ENCODE measurements at regions of chr2 and their contacts with region 1.

Region 1: GRCh38 chr2:42196403-42197267 is 27.5 kb downstream of the EML4 start:
- DNase-seq: peak in 8 of 9 experiments; percentile 15 to 78 (median 47)
- ATAC-seq: peak; percentile 80
- H3K4me3 ChIP-seq: no peak overlapping the region
- H3K4me3 Mint-ChIP-seq: no peak overlapping the region
- H3K27ac ChIP-seq: no peak overlapping the region
- H3K27ac Mint-ChIP-seq: peak overlapping the region; percentile 52
- H3K4me1 ChIP-seq: peaks cover 51% of the 10 kb centered on the region
- H3K4me1 Mint-ChIP-seq: peaks cover 79% of the 10 kb centered on the region
- H3K27me3 ChIP-seq: no peaks in the 10 kb centered on the region
- H3K27me3 Mint-ChIP-seq: no peaks in the 10 kb centered on the region
- CTCF ChIP-seq: peak; percentile 74

Region 2: GRCh38 chr2:40896358-40896757 is 1300.3 kb before region 1 on chr2:
- CTCF ChIA-PET with region 1: no interaction called
- POLR2A ChIA-PET with region 1: no interaction called
- intact Hi-C with region 1: no loop called
- DNase-seq: no peak
- ATAC-seq: no peak
- H3K4me3 ChIP-seq: no peak overlapping the region
- H3K4me3 Mint-ChIP-seq: no peak overlapping the region
- H3K27ac ChIP-seq: no peak overlapping the region
- H3K27ac Mint-ChIP-seq: no peak overlapping the region
- H3K4me1 ChIP-seq: no peaks in the 10 kb centered on the region
- H3K4me1 Mint-ChIP-seq: no peaks in the 10 kb centered on the region
- H3K27me3 ChIP-seq: no peaks in the 10 kb centered on the region
- H3K27me3 Mint-ChIP-seq: no peaks in the 10 kb centered on the region
- CTCF ChIP-seq: no peak

Region 3: GRCh38 chr2:41869542-41870264 is 326.9 kb before region 1 on chr2:
- CTCF ChIA-PET with region 1: interaction called, 6 read pairs
- POLR2A ChIA-PET with region 1: no interaction called
- intact Hi-C with region 1: loop called in 1 of 2 experiments (anchors 5 kb)
- DNase-seq: peak; percentile 44 to 83 (median 75)
- ATAC-seq: peak; percentile 83
- H3K4me3 ChIP-seq: no peak overlapping the region
- H3K4me3 Mint-ChIP-seq: no peak overlapping the region
- H3K27ac ChIP-seq: no peak overlapping the region
- H3K27ac Mint-ChIP-seq: no peak overlapping the region
- H3K4me1 ChIP-seq: no peaks in the 10 kb centered on the region
- H3K4me1 Mint-ChIP-seq: peaks cover 19% of the 10 kb centered on the region
- H3K27me3 ChIP-seq: no peaks in the 10 kb centered on the region
- H3K27me3 Mint-ChIP-seq: peaks cover 5% of the 10 kb centered on the region
- CTCF ChIP-seq: peak; percentile 76

Region 4: DNA sequence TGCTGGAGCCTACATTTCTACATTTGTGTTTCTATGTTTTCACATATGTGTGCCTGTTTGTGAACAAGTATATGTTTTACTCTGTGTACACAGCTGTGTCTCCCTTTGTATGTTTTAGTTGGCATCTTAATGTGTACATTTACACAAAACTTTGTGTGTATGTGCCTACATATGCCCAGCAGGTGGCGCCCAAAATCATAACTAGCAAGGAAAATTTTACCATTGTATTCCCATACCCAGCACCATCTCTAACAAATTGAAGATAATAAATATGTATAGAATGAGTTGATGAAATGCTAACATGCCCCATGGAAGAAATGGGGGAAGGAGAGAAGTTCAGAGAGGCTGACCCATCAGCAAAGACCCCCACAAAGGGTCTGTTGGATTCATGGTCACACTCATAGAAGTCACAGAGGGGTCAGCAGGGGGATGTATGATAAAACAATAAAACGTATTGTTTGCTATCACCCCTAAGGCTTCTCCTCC is 100.7 kb before region 1 on chr2:
- CTCF ChIA-PET with region 1: interaction called, 119 read pairs
- POLR2A ChIA-PET with region 1: interaction called, 5 read pairs
- intact Hi-C with region 1: loop called (anchors 1 kb)
- DNase-seq: peak; percentile 52 to 86 (median 79)
- ATAC-seq: peak; percentile 70
- H3K4me3 ChIP-seq: no peak overlapping the region
- H3K4me3 Mint-ChIP-seq: no peak overlapping the region
- H3K27ac ChIP-seq: no peak overlapping the region
- H3K27ac Mint-ChIP-seq: no peak overlapping the region
- H3K4me1 ChIP-seq: peaks cover 37% of the 10 kb centered on the region
- H3K4me1 Mint-ChIP-seq: peaks cover 43% of the 10 kb centered on the region
- H3K27me3 ChIP-seq: no peaks in the 10 kb centered on the region
- H3K27me3 Mint-ChIP-seq: no peaks in the 10 kb centered on the region
- CTCF ChIP-seq: peak; percentile 84

Region 5: GRCh38 chr2:42127425-42128424 is 68.9 kb before region 1 on chr2:
- CTCF ChIA-PET with region 1: interaction called, 12 read pairs
- POLR2A ChIA-PET with region 1: interaction called, 3 read pairs
- intact Hi-C with region 1: loop called in 1 of 2 experiments (anchors 2 kb)
- DNase-seq: peak in 7 of 9 experiments; percentile 21 to 78 (median 51)
- ATAC-seq: peak; percentile 39
- H3K4me3 ChIP-seq: peak overlapping the region in 1 of 2 experiments; percentile 12
- H3K4me3 Mint-ChIP-seq: peak overlapping the region; percentile 76
- H3K27ac ChIP-seq: peak overlapping the region; percentile 20 to 79
- H3K27ac Mint-ChIP-seq: peak overlapping the region; percentile 95
- H3K4me1 ChIP-seq: peaks cover 95% of the 10 kb centered on the region
- H3K4me1 Mint-ChIP-seq: peaks cover 88% of the 10 kb centered on the region
- H3K27me3 ChIP-seq: no peaks in the 10 kb centered on the region
- H3K27me3 Mint-ChIP-seq: no peaks in the 10 kb centered on the region
- CTCF ChIP-seq: no peak

Region 6: DNA sequence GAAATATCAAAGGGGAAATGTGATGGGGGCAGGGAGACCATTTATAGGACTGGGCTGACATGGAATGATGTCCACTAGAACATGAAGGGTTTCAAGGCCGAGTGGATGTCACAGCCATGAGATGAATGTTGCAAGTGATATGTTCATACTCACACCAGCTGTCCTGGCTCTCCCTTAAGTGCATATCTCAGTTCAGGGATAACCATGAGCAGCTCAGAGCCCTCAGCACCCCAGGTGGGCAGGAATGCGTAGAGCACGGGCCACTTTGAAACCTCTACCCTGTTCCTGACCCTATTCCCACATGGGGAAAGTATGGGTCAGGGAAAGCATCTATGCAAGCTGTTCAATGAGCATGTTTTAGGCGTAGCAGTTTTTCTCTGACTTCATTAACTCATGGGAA is 39.9 kb before region 1 on chr2:
- CTCF ChIA-PET with region 1: no interaction called
- POLR2A ChIA-PET with region 1: no interaction called
- intact Hi-C with region 1: loop called in 1 of 2 experiments (anchors 5 kb)
- DNase-seq: no peak
- ATAC-seq: no peak
- H3K4me3 ChIP-seq: no peak overlapping the region
- H3K4me3 Mint-ChIP-seq: no peak overlapping the region
- H3K27ac ChIP-seq: no peak overlapping the region
- H3K27ac Mint-ChIP-seq: no peak overlapping the region
- H3K4me1 ChIP-seq: no peaks in the 10 kb centered on the region
- H3K4me1 Mint-ChIP-seq: no peaks in the 10 kb centered on the region
- H3K27me3 ChIP-seq: no peaks in the 10 kb centered on the region
- H3K27me3 Mint-ChIP-seq: no peaks in the 10 kb centered on the region
- CTCF ChIP-seq: no peak

Region 7: GRCh38 chr2:42182654-42183267 is 13.9 kb before region 1 on chr2:
- CTCF ChIA-PET with region 1: interaction called, 12 read pairs
- POLR2A ChIA-PET with region 1: no interaction called
- intact Hi-C with region 1: no loop called
- DNase-seq: no peak
- ATAC-seq: no peak
- H3K4me3 ChIP-seq: no peak overlapping the region
- H3K4me3 Mint-ChIP-seq: no peak overlapping the region
- H3K27ac ChIP-seq: no peak overlapping the region
- H3K27ac Mint-ChIP-seq: no peak overlapping the region
- H3K4me1 ChIP-seq: peaks cover 66% of the 10 kb centered on the region
- H3K4me1 Mint-ChIP-seq: peaks cover 85% of the 10 kb centered on the region
- H3K27me3 ChIP-seq: no peaks in the 10 kb centered on the region
- H3K27me3 Mint-ChIP-seq: no peaks in the 10 kb centered on the region
- CTCF ChIP-seq: no peak

Region 8: GRCh38 chr2:42244520-42244919 is 47.9 kb after region 1 on chr2:
- CTCF ChIA-PET with region 1: interaction called, 4 read pairs
- POLR2A ChIA-PET with region 1: no interaction called
- intact Hi-C with region 1: loop called in 1 of 2 experiments (anchors 5 kb)
- DNase-seq: peak in 2 of 9 experiments; percentile 12 to 25
- ATAC-seq: peak; percentile 45
- H3K4me3 ChIP-seq: no peak overlapping the region
- H3K4me3 Mint-ChIP-seq: no peak overlapping the region
- H3K27ac ChIP-seq: no peak overlapping the region
- H3K27ac Mint-ChIP-seq: peak overlapping the region; percentile 28
- H3K4me1 ChIP-seq: peaks cover 28% of the 10 kb centered on the region
- H3K4me1 Mint-ChIP-seq: peaks cover 71% of the 10 kb centered on the region
- H3K27me3 ChIP-seq: no peaks in the 10 kb centered on the region
- H3K27me3 Mint-ChIP-seq: no peaks in the 10 kb centered on the region
- CTCF ChIP-seq: no peak

Region 9: DNA sequence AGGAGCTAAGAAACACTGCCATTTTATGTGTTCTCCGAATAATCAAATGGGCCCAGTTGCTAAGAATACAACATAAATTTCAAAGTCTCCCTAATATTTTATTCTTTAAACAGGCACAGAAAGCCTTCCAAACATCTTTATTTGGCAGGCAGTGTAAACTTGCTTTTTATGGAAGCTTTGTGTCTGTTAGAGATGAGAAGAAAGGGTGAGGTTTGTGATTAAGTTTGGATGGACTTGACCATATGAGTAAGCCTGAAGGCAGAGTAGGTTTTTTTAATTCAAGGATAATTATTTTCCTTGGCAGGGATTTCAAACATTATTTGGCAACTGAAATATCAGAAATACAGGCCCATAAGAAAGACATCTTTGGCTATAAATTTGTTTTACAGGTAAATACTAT is 101.5 kb after region 1 on chr2:
- CTCF ChIA-PET with region 1: no interaction called
- POLR2A ChIA-PET with region 1: no interaction called
- intact Hi-C with region 1: no loop called
- DNase-seq: no peak
- ATAC-seq: no peak
- H3K4me3 ChIP-seq: no peak overlapping the region
- H3K4me3 Mint-ChIP-seq: no peak overlapping the region
- H3K27ac ChIP-seq: peak overlapping the region; percentile 44 to 65
- H3K27ac Mint-ChIP-seq: peak overlapping the region; percentile 72
- H3K4me1 ChIP-seq: peaks cover 41% of the 10 kb centered on the region
- H3K4me1 Mint-ChIP-seq: peaks cover 56% of the 10 kb centered on the region
- H3K27me3 ChIP-seq: no peaks in the 10 kb centered on the region
- H3K27me3 Mint-ChIP-seq: no peaks in the 10 kb centered on the region
- CTCF ChIP-seq: no peak

Measured in CD8-positive, alpha-beta T cell (primary cell).